ENCODE measurements at regions of chr6 and their contacts with region 1.

Region 1: GRCh38 chr6:62285612-62286469 is at the start of gene KHDRBS2:
- DNase-seq: no peak
- H3K4me3 Mint-ChIP-seq: no peak within 1 kb of the TSS
- H3K27ac Mint-ChIP-seq: no peak within 1 kb of the TSS
- H3K4me1 Mint-ChIP-seq: no peaks in the 10 kb centered on the region
- H3K27me3 Mint-ChIP-seq: peaks cover 33% of the 10 kb centered on the region
- CTCF ChIP-seq: no peak
- total RNA-seq, gene KHDRBS2: not detected in 2 replicates

Region 2: DNA sequence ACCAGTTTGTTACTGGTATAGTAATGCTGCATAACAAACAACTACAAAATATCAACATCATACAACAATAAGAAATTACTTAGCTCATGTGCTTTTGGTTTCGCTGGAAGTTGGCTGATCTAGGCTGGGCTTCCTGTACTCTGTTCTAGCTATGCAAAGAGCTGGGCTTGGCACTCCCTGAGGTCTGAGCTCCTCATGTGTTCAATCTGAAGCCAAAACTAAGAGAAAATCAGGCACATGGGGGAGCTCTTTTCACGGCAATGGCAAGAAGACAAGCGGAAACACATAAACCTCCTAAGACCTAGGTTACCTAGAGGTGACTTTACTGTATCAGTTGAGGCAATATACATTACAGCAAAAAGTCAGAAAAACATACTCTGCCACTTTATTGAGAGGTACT is 574.0 kb before region 1 on chr6:
- CTCF ChIA-PET with region 1: interaction called, 5 read pairs
- POLR2A ChIA-PET with region 1: no interaction called
- intact Hi-C with region 1: loop called (anchors 10 kb)
- DNase-seq: peak; percentile 0
- H3K4me3 Mint-ChIP-seq: no peak overlapping the region
- H3K27ac Mint-ChIP-seq: no peak overlapping the region
- H3K4me1 Mint-ChIP-seq: no peaks in the 10 kb centered on the region
- H3K27me3 Mint-ChIP-seq: no peaks in the 10 kb centered on the region
- CTCF ChIP-seq: peak; percentile 24

Region 3: GRCh38 chr6:61809004-61809595 is 476.7 kb before region 1 on chr6:
- CTCF ChIA-PET with region 1: interaction called, 26 read pairs
- POLR2A ChIA-PET with region 1: interaction called, 3 read pairs
- intact Hi-C with region 1: loop called (anchors 1 kb)
- DNase-seq: peak; percentile 49
- H3K4me3 Mint-ChIP-seq: no peak overlapping the region
- H3K27ac Mint-ChIP-seq: no peak overlapping the region
- H3K4me1 Mint-ChIP-seq: no peaks in the 10 kb centered on the region
- H3K27me3 Mint-ChIP-seq: no peaks in the 10 kb centered on the region
- CTCF ChIP-seq: peak; percentile 44

Region 4: DNA sequence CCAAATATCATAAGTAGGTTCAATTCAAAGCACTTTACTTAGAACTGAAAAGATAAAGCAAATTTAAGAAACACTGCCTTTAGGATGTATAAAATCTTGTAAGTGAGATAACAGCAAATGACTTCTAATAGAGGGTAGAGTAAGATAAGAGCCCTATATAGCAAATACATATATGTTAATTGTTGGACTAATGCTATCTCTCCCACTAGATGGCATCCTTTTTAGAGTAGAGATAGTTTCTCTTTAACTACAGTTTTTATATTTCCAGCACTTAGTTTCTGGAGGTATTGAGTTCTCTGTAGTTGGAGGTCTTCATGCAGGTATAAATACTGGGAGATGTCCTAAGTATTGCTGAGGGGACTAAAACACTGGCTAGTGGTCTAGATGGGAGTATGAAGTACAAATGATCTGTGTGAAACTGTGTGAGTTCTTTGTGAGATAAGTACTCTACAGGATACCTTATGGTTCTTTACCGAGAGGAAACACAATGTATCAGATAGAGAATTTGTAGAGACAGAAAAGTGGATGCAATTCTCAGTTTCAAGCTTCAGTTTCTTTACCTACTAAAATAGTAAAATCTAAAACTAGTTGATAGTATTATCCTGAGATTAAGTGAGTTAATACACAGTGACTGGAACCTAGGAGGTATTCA is 399.1 kb before region 1 on chr6:
- CTCF ChIA-PET with region 1: interaction called, 9 read pairs
- POLR2A ChIA-PET with region 1: no interaction called
- intact Hi-C with region 1: loop called (anchors 2 kb)
- DNase-seq: peak; percentile 14
- H3K4me3 Mint-ChIP-seq: no peak overlapping the region
- H3K27ac Mint-ChIP-seq: no peak overlapping the region
- H3K4me1 Mint-ChIP-seq: no peaks in the 10 kb centered on the region
- H3K27me3 Mint-ChIP-seq: peaks cover 50% of the 10 kb centered on the region
- CTCF ChIP-seq: no peak

Region 5: DNA sequence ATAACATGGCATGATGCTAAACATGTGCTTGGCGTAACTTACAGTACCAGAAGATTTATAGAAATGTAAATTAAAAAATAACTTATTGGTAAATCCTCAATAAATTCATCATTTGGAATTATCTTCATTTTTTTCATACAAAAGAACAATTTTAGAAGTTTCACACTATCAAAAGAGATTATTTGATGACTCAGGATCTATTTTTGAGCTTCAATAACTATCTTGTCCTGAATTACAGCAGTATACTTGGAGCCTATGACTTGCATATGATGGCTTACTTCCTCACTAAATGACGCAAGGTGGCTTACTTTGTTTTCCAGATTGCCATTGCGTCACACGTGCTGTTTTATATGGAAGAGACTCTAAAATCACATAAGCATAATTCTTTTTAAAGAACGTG is 49.1 kb before region 1 on chr6:
- CTCF ChIA-PET with region 1: no interaction called
- POLR2A ChIA-PET with region 1: no interaction called
- intact Hi-C with region 1: no loop called
- DNase-seq: no peak
- H3K4me3 Mint-ChIP-seq: no peak overlapping the region
- H3K27ac Mint-ChIP-seq: no peak overlapping the region
- H3K4me1 Mint-ChIP-seq: no peaks in the 10 kb centered on the region
- H3K27me3 Mint-ChIP-seq: no peaks in the 10 kb centered on the region
- CTCF ChIP-seq: no peak